PC-9 (cell line): ENCODE measurements at regions of chr7 and their contacts with region 1.

Region 1: GRCh38 chr7:16801111-16801542 is 3.7 kb downstream of the AGR2 start:
- DNase-seq: peak; percentile 15 to 79
- H3K4me3 ChIP-seq: no peak overlapping the region
- H3K27ac ChIP-seq: no peak overlapping the region
- H3K4me1 ChIP-seq: peaks cover 50% of the 10 kb centered on the region
- H3K27me3 ChIP-seq: no peaks in the 10 kb centered on the region
- CTCF ChIP-seq: peak; percentile 85

Region 2: GRCh38 chr7:16465469-16466361 is 335.4 kb before region 1 on chr7 and contains the start of gene SOSTDC1:
- CTCF ChIA-PET with region 1: no interaction called
- POLR2A ChIA-PET with region 1: no interaction called
- intact Hi-C with region 1: no loop called
- DNase-seq: no peak
- H3K4me3 ChIP-seq: no peak within 1 kb of the TSS
- H3K27ac ChIP-seq: no peak within 1 kb of the TSS
- H3K4me1 ChIP-seq: no peaks in the 10 kb centered on the region
- H3K27me3 ChIP-seq: no peaks in the 10 kb centered on the region
- CTCF ChIP-seq: no peak
- total RNA-seq, gene SOSTDC1: not detected in 2 replicates

Region 3: GRCh38 chr7:16594061-16594460 is 207.1 kb before region 1 on chr7:
- CTCF ChIA-PET with region 1: no interaction called
- POLR2A ChIA-PET with region 1: interaction called, 11 read pairs
- intact Hi-C with region 1: no loop called
- DNase-seq: no peak
- H3K4me3 ChIP-seq: no peak overlapping the region
- H3K27ac ChIP-seq: no peak overlapping the region
- H3K4me1 ChIP-seq: 0 out of 2 replicates have a peak, but pooled peaks cover 3% of the 10 kb centered on the region
- H3K27me3 ChIP-seq: no peaks in the 10 kb centered on the region
- CTCF ChIP-seq: no peak

Region 4: DNA sequence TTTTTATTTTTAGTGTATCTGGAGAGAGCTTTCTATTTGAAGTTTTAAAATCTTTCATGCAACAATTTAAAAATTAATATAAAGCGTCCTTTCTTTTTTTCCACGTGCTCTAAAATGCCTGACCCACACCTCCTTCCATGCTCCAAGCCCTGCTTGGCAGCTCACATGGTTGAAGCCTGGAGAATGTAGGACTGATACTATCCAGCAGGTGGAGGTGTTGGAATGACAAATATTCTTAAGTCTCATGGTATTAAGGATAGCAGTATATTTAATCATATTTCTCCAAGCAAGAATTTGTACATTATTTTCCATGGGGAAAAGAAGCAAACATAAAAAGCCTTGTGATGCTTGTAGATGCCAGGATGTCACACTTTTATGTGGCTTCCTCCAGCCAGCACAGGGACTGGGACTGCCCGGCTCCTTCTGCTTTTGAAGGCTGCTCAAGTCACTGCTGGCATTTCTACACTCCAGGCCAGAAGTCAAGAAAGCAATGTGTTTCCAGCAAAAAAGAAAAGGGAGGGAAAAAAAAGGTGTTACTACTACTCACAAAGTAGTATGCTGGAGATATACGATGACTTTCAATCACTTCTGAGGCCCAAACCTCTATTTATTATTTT is 105.4 kb before region 1 on chr7:
- CTCF ChIA-PET with region 1: no interaction called
- POLR2A ChIA-PET with region 1: no interaction called
- intact Hi-C with region 1: loop called (anchors 1 kb)
- DNase-seq: peak; percentile 37 to 63
- H3K4me3 ChIP-seq: no peak overlapping the region
- H3K27ac ChIP-seq: no peak overlapping the region
- H3K4me1 ChIP-seq: no peaks in the 10 kb centered on the region
- H3K27me3 ChIP-seq: no peaks in the 10 kb centered on the region
- CTCF ChIP-seq: peak; percentile 89

Region 5: DNA sequence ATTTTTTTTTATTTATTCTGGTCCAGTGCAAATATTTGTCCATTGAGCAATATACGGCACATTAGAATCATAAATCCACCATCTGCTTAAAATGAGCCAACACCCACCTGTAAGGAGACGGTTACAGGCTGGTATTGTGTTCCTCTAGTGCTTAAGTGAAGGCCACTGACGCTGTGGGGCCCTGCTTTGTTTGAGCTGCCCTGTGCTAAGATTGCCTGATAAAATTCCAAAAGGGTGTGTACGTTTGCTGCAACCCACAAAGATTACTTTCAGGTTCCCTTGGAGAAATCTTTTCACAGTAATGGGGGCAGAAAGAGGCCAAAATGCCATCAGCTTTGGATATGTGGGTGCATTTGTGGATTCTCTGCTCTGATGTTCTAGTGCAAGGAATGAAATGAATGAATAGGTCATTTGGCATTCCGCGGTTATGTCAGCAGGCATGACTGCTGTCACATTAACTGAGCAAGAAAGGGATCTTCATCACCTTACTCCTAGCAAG is 46.3 kb after region 1 on chr7:
- CTCF ChIA-PET with region 1: interaction called, 3 read pairs
- POLR2A ChIA-PET with region 1: interaction called, 7 read pairs
- intact Hi-C with region 1: loop called (anchors 1 kb)
- DNase-seq: peak; percentile 90 to 100
- H3K4me3 ChIP-seq: peak overlapping the region; percentile 39; the same call in 1 of the 2 replicates
- H3K27ac ChIP-seq: peak overlapping the region; percentile 87
- H3K4me1 ChIP-seq: peaks cover 59% of the 10 kb centered on the region
- H3K27me3 ChIP-seq: no peaks in the 10 kb centered on the region
- CTCF ChIP-seq: no peak

Region 6: DNA sequence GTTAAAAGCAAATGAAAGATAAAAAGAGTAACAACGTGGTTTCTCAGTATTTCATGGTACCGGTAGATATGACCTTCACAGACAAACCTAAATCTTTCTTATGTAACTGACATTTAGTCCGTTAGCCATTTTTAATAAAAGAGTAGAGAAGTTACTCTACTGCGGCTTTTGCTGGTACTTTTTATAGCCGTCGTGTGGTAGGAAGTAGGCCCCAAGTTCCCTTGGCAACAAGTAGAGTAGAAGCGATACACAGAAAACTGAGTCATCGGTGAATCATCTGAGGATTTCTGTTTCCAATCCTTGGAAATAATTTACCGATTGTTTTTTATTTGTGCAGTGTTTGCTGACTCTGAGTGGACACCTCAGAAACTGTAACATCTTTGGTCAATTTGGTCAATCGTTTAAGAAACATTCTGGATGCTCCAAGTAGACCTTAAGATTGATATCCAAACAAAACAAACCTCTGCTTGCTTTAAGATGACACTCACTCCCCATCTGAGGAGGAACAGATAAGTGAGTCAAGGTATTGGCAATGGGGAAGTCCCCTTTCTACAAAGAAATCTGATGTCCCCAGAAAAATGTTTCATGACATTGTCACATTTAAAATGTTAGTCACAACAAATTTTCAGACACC is 433.4 kb after region 1 on chr7:
- CTCF ChIA-PET with region 1: no interaction called
- POLR2A ChIA-PET with region 1: no interaction called
- intact Hi-C with region 1: loop called (anchors 5 kb)
- DNase-seq: peak; percentile 56 to 97
- H3K4me3 ChIP-seq: peak overlapping the region; percentile 21; the same call in 1 of the 2 replicates
- H3K27ac ChIP-seq: peak overlapping the region; percentile 67
- H3K4me1 ChIP-seq: peaks cover 32% of the 10 kb centered on the region
- H3K27me3 ChIP-seq: no peaks in the 10 kb centered on the region
- CTCF ChIP-seq: no peak

Region 7: DNA sequence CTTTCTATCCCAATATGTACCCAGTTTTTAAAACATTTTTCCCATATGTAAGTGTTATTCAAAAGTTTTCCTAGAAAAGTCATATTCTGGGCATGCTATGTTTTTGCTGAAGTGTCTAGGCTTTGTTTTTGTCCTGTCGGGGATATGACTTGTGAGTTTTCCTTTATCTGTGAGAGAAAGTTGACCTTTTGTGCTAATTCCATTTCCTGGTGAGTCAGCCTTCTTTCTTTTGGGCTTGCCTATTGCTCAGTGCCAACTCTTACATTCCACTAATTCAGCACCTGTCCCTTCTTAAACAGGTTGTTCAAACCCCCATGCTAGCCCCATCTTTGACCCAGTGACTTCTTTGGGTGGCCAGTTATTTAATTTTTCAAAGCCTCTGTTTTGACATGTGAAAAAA is 643.5 kb after region 1 on chr7:
- CTCF ChIA-PET with region 1: interaction called, 10 read pairs
- POLR2A ChIA-PET with region 1: no interaction called
- intact Hi-C with region 1: no loop called
- DNase-seq: peak; percentile 34 to 81
- H3K4me3 ChIP-seq: no peak overlapping the region
- H3K27ac ChIP-seq: peak overlapping the region; percentile 51
- H3K4me1 ChIP-seq: peaks cover 30% of the 10 kb centered on the region
- H3K27me3 ChIP-seq: no peaks in the 10 kb centered on the region
- CTCF ChIP-seq: no peak